ENCODE measurements at regions of chr11 and their contacts with region 1.

Region 1: GRCh38 chr11:106724293-106724892 is 293.9 kb downstream of the GUCY1A2 start:
- DNase-seq: no peak
- H3K4me3 ChIP-seq: no peak overlapping the region
- H3K27ac ChIP-seq: no peak overlapping the region
- H3K4me1 ChIP-seq: peaks cover 0 to 8% (median 0%) of the 10 kb centered on the region in 3 donors
- H3K27me3 ChIP-seq: no peaks in the 10 kb centered on the region
- CTCF ChIP-seq: no peak
- POLR2A ChIP-seq: no peak

Region 2: GRCh38 chr11:107020594-107020993 is 296.2 kb after region 1 on chr11:
- intact Hi-C with region 1: loop called (anchors 10 kb)
- DNase-seq: no peak
- H3K4me3 ChIP-seq: no peak overlapping the region
- H3K27ac ChIP-seq: no peak overlapping the region
- H3K4me1 ChIP-seq: peaks cover 12 to 22% (median 12%) of the 10 kb centered on the region in 3 donors
- H3K27me3 ChIP-seq: peaks cover 0 to 58% (median 5%) of the 10 kb centered on the region in 4 donors
- CTCF ChIP-seq: no peak
- POLR2A ChIP-seq: no peak

Measured in esophagus squamous epithelium (tissue), 5 donors.